Posterior vena cava (tissue), 2 donors: ENCODE measurements at regions of chr3 and their contacts with region 1.

Region 1: GRCh38 chr3:188673646-188674186 is 498.1 kb upstream of the TPRG1 start:
- DNase-seq: no peak

Region 2: DNA sequence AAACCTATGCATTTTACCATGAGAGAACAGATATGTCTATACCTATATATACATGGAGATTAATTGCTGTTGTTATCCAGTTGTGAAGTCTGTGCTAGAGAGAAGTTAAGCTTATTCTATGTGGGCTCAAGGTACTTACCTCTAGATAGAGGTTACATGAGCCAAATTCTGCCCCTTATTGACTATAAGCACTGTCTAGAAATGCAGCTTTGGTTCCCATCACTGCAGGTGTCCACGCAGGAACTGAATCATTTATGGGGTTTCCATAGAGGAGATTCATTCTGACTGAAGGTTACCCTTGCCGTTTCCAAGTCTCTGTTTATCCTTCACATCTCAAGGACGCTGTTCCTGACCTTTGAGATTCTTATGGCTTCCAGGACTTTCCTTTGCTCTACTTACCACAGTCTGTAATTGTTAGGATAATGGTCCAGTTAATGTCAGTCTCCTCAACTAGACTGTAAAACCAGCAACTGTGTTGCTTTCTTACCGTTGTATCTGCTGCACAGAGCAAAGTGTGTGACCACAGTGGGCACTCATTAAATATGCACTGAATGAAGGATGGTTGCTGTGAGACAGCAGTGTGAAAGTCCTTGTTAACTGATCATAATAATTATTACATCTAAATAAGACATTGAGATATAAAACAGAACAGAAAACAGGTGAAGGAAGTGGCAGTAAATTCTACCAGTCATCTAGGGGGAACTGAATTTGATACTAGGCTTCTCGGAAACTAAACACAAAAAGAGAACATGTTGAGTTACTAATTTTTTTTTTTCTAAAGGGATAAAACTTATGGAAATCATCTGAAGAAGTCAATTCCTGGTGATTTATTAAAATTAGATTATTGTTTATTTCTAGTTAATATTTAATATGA is 884.5 kb before region 1 on chr3:
- intact Hi-C with region 1: no loop called
- DNase-seq: no peak

Region 3: DNA sequence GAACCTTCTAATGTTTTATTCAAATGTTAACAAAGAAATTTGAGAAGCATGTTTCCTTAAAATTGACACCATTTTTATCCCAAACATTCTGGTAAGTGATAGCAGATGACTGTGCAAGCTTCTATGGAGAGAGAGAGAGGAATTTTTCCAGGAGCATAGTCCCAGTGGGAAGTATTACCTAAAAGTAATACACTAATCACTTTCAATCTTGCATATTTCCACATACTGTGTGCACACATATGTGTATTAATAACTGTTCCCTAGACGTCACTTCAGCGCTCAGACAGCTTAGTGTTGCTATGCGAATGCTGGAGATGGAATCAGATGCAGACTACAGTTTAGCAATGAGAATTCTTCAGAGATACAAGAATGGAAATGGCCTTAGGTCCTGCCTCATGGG is 73.8 kb after region 1 on chr3:
- intact Hi-C with region 1: no loop called
- DNase-seq: no peak

Region 4: GRCh38 chr3:188854772-188855149 is 181.0 kb after region 1 on chr3:
- intact Hi-C with region 1: loop called in 1 of 2 experiments (anchors 5 kb)
- DNase-seq: no peak